ENCODE measurements at regions of chr4 and their contacts with region 1.

Region 1: DNA sequence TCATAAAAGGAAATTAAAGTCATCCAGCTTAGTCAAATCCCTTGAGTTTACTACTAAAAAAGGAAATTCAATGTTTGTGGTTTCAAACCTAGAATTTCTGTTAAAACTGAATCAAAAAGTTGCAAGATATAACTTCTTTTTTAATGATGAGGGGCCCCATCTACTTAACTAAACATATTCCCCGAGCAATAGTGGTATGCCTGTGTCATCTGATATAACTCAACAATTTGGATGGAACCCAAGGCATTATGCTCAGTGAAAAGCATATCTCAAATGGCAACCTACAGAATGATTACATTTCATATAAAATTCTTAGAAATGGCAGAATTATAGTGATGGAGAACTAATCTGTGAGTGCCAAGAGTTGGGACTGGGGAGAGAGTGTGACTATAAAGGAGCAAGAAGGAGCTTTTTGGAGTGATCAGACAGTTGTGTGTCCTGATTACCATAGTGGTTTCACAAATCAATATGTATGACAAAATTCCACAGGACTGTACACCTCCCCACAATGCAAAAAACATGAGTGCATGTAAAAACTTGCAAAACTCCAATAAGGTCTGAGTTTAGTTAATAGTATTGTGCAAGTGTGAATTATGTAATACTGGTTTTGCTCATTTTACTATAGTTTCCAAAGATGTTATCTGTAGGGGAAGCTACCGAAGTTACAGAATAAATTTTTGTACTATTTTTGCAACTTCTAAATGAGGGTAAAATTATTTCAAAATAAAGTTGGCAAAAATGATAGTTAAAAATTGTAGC is 323.2 kb downstream of the ARHGAP24 start:
- DNase-seq: no peak
- ATAC-seq: no peak
- H3K4me3 ChIP-seq: no peak overlapping the region
- H3K4me3 Mint-ChIP-seq: no peak overlapping the region
- H3K27ac ChIP-seq: no peak overlapping the region
- H3K27ac Mint-ChIP-seq: no peak overlapping the region
- H3K4me1 ChIP-seq: peaks cover 0 to 6% of the 10 kb centered on the region in 2 donors
- H3K4me1 Mint-ChIP-seq: peaks cover 17% of the 10 kb centered on the region
- H3K27me3 ChIP-seq: no peaks in the 10 kb centered on the region
- H3K27me3 Mint-ChIP-seq: no peaks in the 10 kb centered on the region
- CTCF ChIP-seq: no peak

Region 2: DNA sequence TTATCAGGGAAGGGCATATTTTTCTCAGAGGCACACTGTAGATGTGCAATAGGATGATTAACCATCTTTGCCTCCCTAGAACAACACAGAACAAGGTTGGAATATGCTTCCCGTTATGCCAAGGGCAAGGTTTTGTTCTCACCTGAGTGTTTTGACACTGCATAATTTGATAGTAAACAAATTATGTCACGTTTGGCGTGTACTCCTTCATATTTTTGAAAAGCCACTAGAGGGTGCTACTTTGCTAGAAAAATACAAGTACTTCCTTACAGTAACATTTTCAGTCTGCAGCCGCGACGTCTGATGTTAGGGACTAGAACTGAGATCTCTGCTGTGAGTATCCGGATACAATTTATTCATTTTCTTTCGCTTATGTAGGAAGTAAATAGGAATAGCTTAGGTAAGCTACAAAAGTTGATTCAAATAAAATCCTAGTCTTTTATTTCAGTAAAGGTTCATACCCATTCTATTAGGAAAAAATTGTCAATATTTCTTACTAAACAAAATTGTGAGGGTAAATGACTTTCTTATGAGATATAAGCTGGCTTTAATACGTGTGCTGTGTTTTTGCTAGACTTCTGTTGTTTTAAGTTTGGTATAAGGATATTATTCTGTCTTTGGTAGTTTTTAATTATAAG is 650.6 kb before region 1 on chr4:
- CTCF ChIA-PET with region 1: interaction called, 54 read pairs
- POLR2A ChIA-PET with region 1: no interaction called
- intact Hi-C with region 1: loop called (anchors 1 kb)
- DNase-seq: peak; percentile 82
- ATAC-seq: peak; percentile 83
- H3K4me3 ChIP-seq: no peak overlapping the region
- H3K4me3 Mint-ChIP-seq: no peak overlapping the region
- H3K27ac ChIP-seq: no peak overlapping the region
- H3K27ac Mint-ChIP-seq: no peak overlapping the region
- H3K4me1 ChIP-seq: peaks cover 0 to 2% of the 10 kb centered on the region in 2 donors
- H3K4me1 Mint-ChIP-seq: peaks cover 6% of the 10 kb centered on the region
- H3K27me3 ChIP-seq: no peaks in the 10 kb centered on the region
- H3K27me3 Mint-ChIP-seq: no peaks in the 10 kb centered on the region
- CTCF ChIP-seq: peak; percentile 90

Region 3: GRCh38 chr4:85761803-85762528 is 36.2 kb before region 1 on chr4:
- CTCF ChIA-PET with region 1: interaction called, 11 read pairs
- POLR2A ChIA-PET with region 1: no interaction called
- intact Hi-C with region 1: loop called (anchors 5 kb)
- DNase-seq: no peak
- ATAC-seq: no peak
- H3K4me3 ChIP-seq: no peak overlapping the region
- H3K4me3 Mint-ChIP-seq: no peak overlapping the region
- H3K27ac ChIP-seq: no peak overlapping the region
- H3K27ac Mint-ChIP-seq: no peak overlapping the region
- H3K4me1 ChIP-seq: peaks cover 0 to 5% of the 10 kb centered on the region in 2 donors
- H3K4me1 Mint-ChIP-seq: peaks cover 12% of the 10 kb centered on the region
- H3K27me3 ChIP-seq: no peaks in the 10 kb centered on the region
- H3K27me3 Mint-ChIP-seq: no peaks in the 10 kb centered on the region
- CTCF ChIP-seq: no peak

Region 4: GRCh38 chr4:85784947-85785346 is 13.2 kb before region 1 on chr4:
- CTCF ChIA-PET with region 1: interaction called, 39 read pairs
- POLR2A ChIA-PET with region 1: no interaction called
- intact Hi-C with region 1: no loop called
- DNase-seq: no peak
- ATAC-seq: no peak
- H3K4me3 ChIP-seq: no peak overlapping the region
- H3K4me3 Mint-ChIP-seq: no peak overlapping the region
- H3K27ac ChIP-seq: no peak overlapping the region
- H3K27ac Mint-ChIP-seq: no peak overlapping the region
- H3K4me1 ChIP-seq: peaks cover 19 to 26% of the 10 kb centered on the region in 2 donors
- H3K4me1 Mint-ChIP-seq: peaks cover 42% of the 10 kb centered on the region
- H3K27me3 ChIP-seq: no peaks in the 10 kb centered on the region
- H3K27me3 Mint-ChIP-seq: no peaks in the 10 kb centered on the region
- CTCF ChIP-seq: no peak

Region 5: GRCh38 chr4:85968945-85969819 is 171.0 kb after region 1 on chr4:
- CTCF ChIA-PET with region 1: interaction called, 26 read pairs
- POLR2A ChIA-PET with region 1: no interaction called
- intact Hi-C with region 1: no loop called
- DNase-seq: peak; percentile 66
- ATAC-seq: peak; percentile 28
- H3K4me3 ChIP-seq: no peak overlapping the region
- H3K4me3 Mint-ChIP-seq: no peak overlapping the region
- H3K27ac ChIP-seq: no peak overlapping the region
- H3K27ac Mint-ChIP-seq: no peak overlapping the region
- H3K4me1 ChIP-seq: peaks cover 0 to 6% of the 10 kb centered on the region in 2 donors
- H3K4me1 Mint-ChIP-seq: peaks cover 15% of the 10 kb centered on the region
- H3K27me3 ChIP-seq: no peaks in the 10 kb centered on the region
- H3K27me3 Mint-ChIP-seq: no peaks in the 10 kb centered on the region
- CTCF ChIP-seq: peak; percentile 75

Measured in B cell (primary cell).